ENCODE measurements at regions of chr9 and their contacts with region 1.

Region 1: DNA sequence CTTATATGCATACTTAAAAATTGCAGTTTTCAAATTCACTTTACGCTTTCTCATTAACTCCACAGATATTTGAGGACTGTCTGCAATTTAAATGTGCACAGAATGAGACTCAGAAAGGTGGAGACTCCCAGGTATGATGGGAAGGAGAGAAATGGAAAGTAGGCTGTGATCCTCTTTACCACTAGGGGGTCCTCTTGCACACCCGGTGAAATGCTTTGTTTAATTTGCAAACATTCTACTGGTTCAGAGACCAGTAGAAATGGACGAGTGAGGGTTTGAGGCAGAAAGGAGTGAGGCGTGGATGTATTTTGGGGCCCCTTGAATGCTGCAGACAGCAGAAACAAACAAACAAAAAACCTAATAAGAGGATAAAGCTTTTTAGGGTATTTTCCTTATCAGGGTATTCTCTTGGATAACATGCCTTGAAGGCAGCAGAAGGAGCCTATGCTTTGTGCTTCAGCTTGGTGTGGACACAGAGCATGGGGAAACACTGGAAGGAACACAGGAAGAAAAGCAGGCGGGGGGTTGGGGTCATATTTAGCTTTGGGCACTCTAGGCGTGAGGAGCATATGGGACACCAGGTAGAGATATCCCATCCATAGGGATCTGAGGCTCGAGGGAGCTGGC is 410.1 kb downstream of the DMRT2 start:
- DNase-seq: peak; percentile 25
- ATAC-seq: peak; percentile 89
- H3K4me3 ChIP-seq: no peak overlapping the region
- H3K27ac ChIP-seq: no peak overlapping the region
- H3K4me1 ChIP-seq: no peaks in the 10 kb centered on the region
- H3K27me3 ChIP-seq: no peaks in the 10 kb centered on the region
- CTCF ChIP-seq: peak; percentile 79 to 83 (median 80)
- EP300 ChIP-seq: no peak
- POLR2A ChIP-seq: no peak
- RAD21 ChIP-seq: peak; percentile 99

Region 2: GRCh38 chr9:1490341-1491232 is 30.3 kb after region 1 on chr9:
- CTCF ChIA-PET with region 1: interaction called, 5 read pairs
- POLR2A ChIA-PET with region 1: no interaction called
- RAD21 ChIA-PET with region 1: interaction called, 8 read pairs
- SMC1A ChIA-PET with region 1: interaction called, 10 read pairs
- in situ Hi-C with region 1: no loop called
- intact Hi-C with region 1: no loop called
- DNase-seq: peak; percentile 35
- ATAC-seq: peak; percentile 96
- H3K4me3 ChIP-seq: no peak overlapping the region
- H3K27ac ChIP-seq: peak overlapping the region; percentile 22; the same call in 1 of the 2 replicates
- H3K4me1 ChIP-seq: peaks cover 9% of the 10 kb centered on the region; the same call in 1 of the 2 replicates
- H3K27me3 ChIP-seq: no peaks in the 10 kb centered on the region
- CTCF ChIP-seq: no peak
- EP300 ChIP-seq: peak; percentile 45 to 59; a peak in 2 of 4 replicates
- POLR2A ChIP-seq: no peak
- RAD21 ChIP-seq: no peak

Region 3: DNA sequence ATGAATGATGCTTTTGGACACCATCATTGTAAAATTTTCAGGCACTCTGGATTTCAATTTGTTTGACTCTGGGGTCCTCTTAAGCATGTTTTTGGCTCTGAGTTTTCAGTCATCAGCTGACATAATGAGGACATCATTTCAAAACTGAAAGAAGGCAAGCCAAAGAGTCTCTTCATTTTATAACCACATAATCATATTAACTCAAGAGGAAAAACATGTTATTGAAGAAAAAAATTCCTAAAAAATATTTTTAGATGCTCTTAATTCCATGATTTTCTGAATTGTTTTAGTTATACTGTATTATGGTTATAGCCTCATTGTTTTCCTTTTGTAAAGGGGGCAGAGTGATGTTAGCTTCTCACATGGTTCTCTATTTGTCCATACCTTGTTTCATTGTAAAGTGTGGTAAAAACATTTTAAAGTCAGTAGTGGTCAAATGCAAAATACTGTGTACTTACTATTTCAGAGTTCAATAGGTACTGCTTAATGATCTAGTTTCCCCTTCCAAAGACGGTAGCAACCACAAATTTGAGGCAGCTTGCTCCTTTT is 62.0 kb after region 1 on chr9:
- CTCF ChIA-PET with region 1: interaction called, 14 read pairs
- POLR2A ChIA-PET with region 1: no interaction called
- RAD21 ChIA-PET with region 1: interaction called, 10 read pairs
- SMC1A ChIA-PET with region 1: interaction called, 24 read pairs
- in situ Hi-C with region 1: no loop called
- intact Hi-C with region 1: loop called (anchors 2 kb)
- DNase-seq: no peak
- ATAC-seq: peak; percentile 92
- H3K4me3 ChIP-seq: no peak overlapping the region
- H3K27ac ChIP-seq: no peak overlapping the region
- H3K4me1 ChIP-seq: no peaks in the 10 kb centered on the region; the same call in 1 of the 2 replicates
- H3K27me3 ChIP-seq: no peaks in the 10 kb centered on the region
- CTCF ChIP-seq: peak in 1 of 3 experiments; percentile 22; a peak in 1 of 6 replicates
- EP300 ChIP-seq: peak in 1 of 2 experiments; percentile 45; a peak in 1 of 4 replicates
- POLR2A ChIP-seq: no peak
- RAD21 ChIP-seq: 0 out of 2 replicates have a peak, but pooled peaks have one; percentile 14

Region 4: GRCh38 chr9:1580215-1580614 is 120.0 kb after region 1 on chr9:
- CTCF ChIA-PET with region 1: interaction called, 12 read pairs
- POLR2A ChIA-PET with region 1: no interaction called
- RAD21 ChIA-PET with region 1: interaction called, 15 read pairs
- SMC1A ChIA-PET with region 1: interaction called, 11 read pairs
- in situ Hi-C with region 1: no loop called
- intact Hi-C with region 1: no loop called
- DNase-seq: no peak
- ATAC-seq: peak; percentile 92
- H3K4me3 ChIP-seq: no peak overlapping the region
- H3K27ac ChIP-seq: no peak overlapping the region
- H3K4me1 ChIP-seq: 0 out of 2 replicates have a peak, but pooled peaks cover 2% of the 10 kb centered on the region
- H3K27me3 ChIP-seq: no peaks in the 10 kb centered on the region
- CTCF ChIP-seq: no peak
- EP300 ChIP-seq: no peak
- POLR2A ChIP-seq: no peak
- RAD21 ChIP-seq: no peak

Region 5: GRCh38 chr9:1732670-1733069 is 272.4 kb after region 1 on chr9:
- CTCF ChIA-PET with region 1: interaction called, 16 read pairs
- POLR2A ChIA-PET with region 1: no interaction called
- RAD21 ChIA-PET with region 1: interaction called, 5 read pairs
- SMC1A ChIA-PET with region 1: interaction called, 13 read pairs
- in situ Hi-C with region 1: no loop called
- intact Hi-C with region 1: no loop called
- DNase-seq: no peak
- ATAC-seq: peak; percentile 84
- H3K4me3 ChIP-seq: no peak overlapping the region
- H3K27ac ChIP-seq: no peak overlapping the region
- H3K4me1 ChIP-seq: no peaks in the 10 kb centered on the region
- H3K27me3 ChIP-seq: no peaks in the 10 kb centered on the region
- CTCF ChIP-seq: peak; percentile 39 to 47 (median 43); a peak in 5 of 6 replicates
- EP300 ChIP-seq: no peak
- POLR2A ChIP-seq: no peak
- RAD21 ChIP-seq: peak; percentile 49

Region 6: GRCh38 chr9:1869843-1870242 is 409.6 kb after region 1 on chr9:
- CTCF ChIA-PET with region 1: interaction called, 6 read pairs
- POLR2A ChIA-PET with region 1: no interaction called
- RAD21 ChIA-PET with region 1: no interaction called
- SMC1A ChIA-PET with region 1: interaction called, 5 read pairs
- in situ Hi-C with region 1: loop called (anchors 25 kb)
- intact Hi-C with region 1: loop called (anchors 5 kb)
- DNase-seq: no peak
- ATAC-seq: peak; percentile 82
- H3K4me3 ChIP-seq: no peak overlapping the region
- H3K27ac ChIP-seq: 0 out of 2 replicates have a peak overlapping the region, but pooled peaks have one; percentile 14
- H3K4me1 ChIP-seq: peaks cover 28% of the 10 kb centered on the region
- H3K27me3 ChIP-seq: no peaks in the 10 kb centered on the region
- CTCF ChIP-seq: peak; percentile 53 to 72 (median 62)
- EP300 ChIP-seq: no peak
- POLR2A ChIP-seq: no peak
- RAD21 ChIP-seq: peak; percentile 91

Region 7: GRCh38 chr9:2243666-2244555 is 783.7 kb after region 1 on chr9:
- CTCF ChIA-PET with region 1: no interaction called
- POLR2A ChIA-PET with region 1: no interaction called
- RAD21 ChIA-PET with region 1: no interaction called
- SMC1A ChIA-PET with region 1: no interaction called
- in situ Hi-C with region 1: no loop called
- intact Hi-C with region 1: no loop called
- DNase-seq: no peak
- ATAC-seq: no peak
- H3K4me3 ChIP-seq: no peak overlapping the region
- H3K27ac ChIP-seq: no peak overlapping the region
- H3K4me1 ChIP-seq: peaks cover 7% of the 10 kb centered on the region
- H3K27me3 ChIP-seq: 0 out of 4 replicates have a peak, but pooled peaks cover 0 to 3% of the 10 kb centered on the region in 2 experiments
- CTCF ChIP-seq: no peak
- EP300 ChIP-seq: no peak
- POLR2A ChIP-seq: no peak
- RAD21 ChIP-seq: no peak